ENCODE measurements at regions of chr9 and their contacts with region 1.

Region 1: DNA sequence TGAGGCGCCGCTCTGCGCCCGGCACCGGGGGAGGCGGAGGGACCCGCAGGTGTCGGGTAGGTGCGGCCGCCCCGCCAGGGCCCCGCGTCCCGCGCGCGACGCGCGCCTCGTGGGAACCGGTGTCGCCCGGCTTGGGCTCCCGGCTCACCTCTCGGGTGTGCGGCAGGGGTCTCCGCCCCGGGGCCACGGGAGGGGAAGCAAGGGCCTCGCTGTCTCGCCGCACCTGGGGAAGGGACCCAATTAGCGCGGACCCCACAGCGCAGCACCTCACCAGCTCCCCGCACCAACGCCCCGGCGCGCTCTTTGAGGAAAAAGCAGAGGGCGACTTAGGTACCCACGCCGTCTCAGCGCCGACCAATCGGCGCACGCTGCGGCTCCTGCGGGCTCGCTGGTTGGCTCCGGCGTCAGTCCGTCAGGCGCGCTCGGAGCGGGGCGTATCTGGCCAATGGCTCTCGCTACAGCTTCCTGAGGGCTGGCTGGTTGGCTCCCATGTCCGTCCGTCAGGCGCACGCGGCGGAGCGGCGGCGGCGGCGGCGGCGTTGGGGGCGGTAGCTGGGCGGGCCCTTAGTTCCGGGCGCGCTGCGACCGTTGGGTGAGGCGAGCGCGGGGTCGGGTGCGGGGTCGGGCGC is at the start of gene TRAF2:
- DNase-seq: peak; percentile 98
- H3K4me3 Mint-ChIP-seq: peak within 1 kb of the TSS; percentile 98
- H3K27ac Mint-ChIP-seq: peak within 1 kb of the TSS; percentile 89
- H3K4me1 Mint-ChIP-seq: peaks cover 59% of the 10 kb centered on the region
- H3K27me3 Mint-ChIP-seq: no peaks in the 10 kb centered on the region
- total RNA-seq, gene TRAF2: 39.7 to 41.8 TPM

Region 2: DNA sequence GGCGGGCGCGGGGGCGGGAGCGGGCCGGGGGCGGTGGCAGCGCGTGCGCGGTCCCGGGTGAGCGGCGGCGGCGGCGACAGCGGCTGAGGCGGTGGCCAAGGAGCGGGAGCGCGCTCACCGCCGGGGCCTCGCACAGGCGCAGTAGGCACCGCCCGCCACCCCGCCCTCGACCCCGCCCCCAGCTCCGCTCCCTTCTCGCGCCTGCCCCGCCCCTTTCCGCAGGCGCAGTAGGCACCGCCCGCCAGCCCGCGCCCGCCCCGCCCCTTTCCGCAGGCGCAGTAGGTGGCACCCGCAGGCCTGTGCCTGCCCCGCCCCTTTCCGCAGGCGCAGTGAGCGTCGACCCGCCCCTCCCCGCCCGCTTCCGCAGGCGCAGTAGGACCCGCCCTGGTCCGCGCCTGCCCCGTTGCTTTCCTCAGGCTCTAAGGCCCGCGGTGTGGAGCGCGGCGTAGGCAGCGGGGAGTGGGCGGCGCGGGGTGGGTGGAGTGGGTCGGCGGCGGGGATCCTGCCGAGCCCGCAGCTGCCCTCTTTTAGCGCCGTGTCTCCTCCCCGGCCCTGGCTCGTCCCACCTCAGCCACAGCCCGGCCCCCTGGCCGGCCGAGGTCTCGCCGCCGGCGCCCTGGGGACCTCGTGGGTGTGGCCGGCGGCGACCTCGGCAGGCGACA is 978.5 kb before region 1 on chr9 and contains the start of gene CAMSAP1:
- CTCF ChIA-PET with region 1: no interaction called
- intact Hi-C with region 1: loop called (anchors 10 kb)
- DNase-seq: peak; percentile 94
- H3K4me3 Mint-ChIP-seq: peak within 1 kb of the TSS; percentile 80
- H3K27ac Mint-ChIP-seq: peak within 1 kb of the TSS; percentile 89
- H3K4me1 Mint-ChIP-seq: peaks cover 53% of the 10 kb centered on the region
- H3K27me3 Mint-ChIP-seq: no peaks in the 10 kb centered on the region
- total RNA-seq, gene CAMSAP1: 32.6 to 35.2 TPM

Region 3: GRCh38 chr9:136539427-136540421 is 346.3 kb before region 1 on chr9:
- CTCF ChIA-PET with region 1: no interaction called
- intact Hi-C with region 1: loop called (anchors 2 kb)
- DNase-seq: peak; percentile 99
- H3K4me3 Mint-ChIP-seq: peak overlapping the region; percentile 80
- H3K27ac Mint-ChIP-seq: peak overlapping the region; percentile 100
- H3K4me1 Mint-ChIP-seq: peaks cover 70% of the 10 kb centered on the region
- H3K27me3 Mint-ChIP-seq: no peaks in the 10 kb centered on the region

Region 4: GRCh38 chr9:136700959-136701667 is 185.0 kb before region 1 on chr9:
- CTCF ChIA-PET with region 1: no interaction called
- intact Hi-C with region 1: no loop called
- DNase-seq: peak; percentile 93
- H3K4me3 Mint-ChIP-seq: peak overlapping the region; percentile 69
- H3K27ac Mint-ChIP-seq: peak overlapping the region; percentile 62
- H3K4me1 Mint-ChIP-seq: peaks cover 18% of the 10 kb centered on the region
- H3K27me3 Mint-ChIP-seq: peaks cover 9% of the 10 kb centered on the region

Region 5: GRCh38 chr9:136807281-136808074 is 78.6 kb before region 1 on chr9 and contains the start of gene RABL6:
- CTCF ChIA-PET with region 1: no interaction called
- intact Hi-C with region 1: loop called (anchors 5 kb)
- DNase-seq: peak; percentile 76
- H3K4me3 Mint-ChIP-seq: peak within 1 kb of the TSS; percentile 82
- H3K27ac Mint-ChIP-seq: peak within 1 kb of the TSS; percentile 88
- H3K4me1 Mint-ChIP-seq: peaks cover 32% of the 10 kb centered on the region
- H3K27me3 Mint-ChIP-seq: no peaks in the 10 kb centered on the region
- total RNA-seq, gene RABL6: 74.9 to 82.7 TPM

Region 6: GRCh38 chr9:136865735-136866103 is 20.3 kb before region 1 on chr9:
- CTCF ChIA-PET with region 1: interaction called, 3 read pairs
- intact Hi-C with region 1: loop called (anchors 1 kb)
- DNase-seq: no peak
- H3K4me3 Mint-ChIP-seq: peak overlapping the region; percentile 87
- H3K27ac Mint-ChIP-seq: peak overlapping the region; percentile 69
- H3K4me1 Mint-ChIP-seq: peaks cover 20% of the 10 kb centered on the region
- H3K27me3 Mint-ChIP-seq: no peaks in the 10 kb centered on the region

Region 7: GRCh38 chr9:136944519-136945279 is 58.6 kb after region 1 on chr9 and contains the starts of genes C8G and FBXW5:
- CTCF ChIA-PET with region 1: interaction called, 3 read pairs
- intact Hi-C with region 1: loop called (anchors 1 kb)
- DNase-seq: peak; percentile 94
- H3K4me3 Mint-ChIP-seq: peak within 1 kb of the TSS; percentile 77
- H3K27ac Mint-ChIP-seq: peak within 1 kb of the TSS; percentile 81
- H3K4me1 Mint-ChIP-seq: peaks cover 9% of the 10 kb centered on the region
- H3K27me3 Mint-ChIP-seq: no peaks in the 10 kb centered on the region
- total RNA-seq, gene C8G: 0.83 TPM in 1 of 2 experiments, not detected in the other
- total RNA-seq, gene FBXW5: 44.0 to 47.8 TPM

Region 8: DNA sequence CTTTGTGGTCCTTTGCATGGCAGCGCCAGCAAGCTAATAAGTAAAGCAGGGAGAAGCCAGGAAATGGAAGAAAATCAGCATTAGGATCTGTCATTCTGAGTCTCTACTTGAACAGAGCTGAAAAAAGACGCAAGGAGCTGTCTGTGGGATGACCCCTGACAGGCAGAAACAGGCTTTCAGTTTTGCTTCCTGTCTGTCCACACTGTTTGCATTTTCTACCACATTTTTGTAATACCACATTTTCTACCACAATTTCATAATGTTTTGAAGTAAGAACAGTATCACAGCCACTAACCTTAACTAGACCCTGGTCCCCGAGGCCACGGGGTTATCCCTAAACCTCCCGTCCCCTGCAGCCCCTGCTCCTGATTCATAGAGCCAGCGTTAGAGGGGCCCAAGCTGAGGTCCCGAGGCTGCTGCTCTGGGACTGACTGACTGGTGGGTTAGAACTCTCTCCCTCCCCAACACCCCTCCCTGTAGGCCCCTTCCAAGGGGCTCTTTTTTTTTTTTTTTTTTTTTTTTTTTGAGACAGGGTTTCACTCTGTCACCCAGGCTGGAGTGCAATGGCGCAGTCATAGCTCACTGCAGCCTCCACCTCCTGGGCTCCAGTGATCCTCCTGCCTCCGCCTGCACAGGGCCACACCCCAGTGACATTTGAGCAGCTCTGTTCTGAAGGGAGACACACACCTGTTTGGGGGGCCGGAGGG is 114.3 kb after region 1 on chr9:
- CTCF ChIA-PET with region 1: no interaction called
- intact Hi-C with region 1: no loop called
- DNase-seq: no peak
- H3K4me3 Mint-ChIP-seq: no peak overlapping the region
- H3K27ac Mint-ChIP-seq: no peak overlapping the region
- H3K4me1 Mint-ChIP-seq: peaks cover 13% of the 10 kb centered on the region
- H3K27me3 Mint-ChIP-seq: peaks cover 13% of the 10 kb centered on the region

Region 9: DNA sequence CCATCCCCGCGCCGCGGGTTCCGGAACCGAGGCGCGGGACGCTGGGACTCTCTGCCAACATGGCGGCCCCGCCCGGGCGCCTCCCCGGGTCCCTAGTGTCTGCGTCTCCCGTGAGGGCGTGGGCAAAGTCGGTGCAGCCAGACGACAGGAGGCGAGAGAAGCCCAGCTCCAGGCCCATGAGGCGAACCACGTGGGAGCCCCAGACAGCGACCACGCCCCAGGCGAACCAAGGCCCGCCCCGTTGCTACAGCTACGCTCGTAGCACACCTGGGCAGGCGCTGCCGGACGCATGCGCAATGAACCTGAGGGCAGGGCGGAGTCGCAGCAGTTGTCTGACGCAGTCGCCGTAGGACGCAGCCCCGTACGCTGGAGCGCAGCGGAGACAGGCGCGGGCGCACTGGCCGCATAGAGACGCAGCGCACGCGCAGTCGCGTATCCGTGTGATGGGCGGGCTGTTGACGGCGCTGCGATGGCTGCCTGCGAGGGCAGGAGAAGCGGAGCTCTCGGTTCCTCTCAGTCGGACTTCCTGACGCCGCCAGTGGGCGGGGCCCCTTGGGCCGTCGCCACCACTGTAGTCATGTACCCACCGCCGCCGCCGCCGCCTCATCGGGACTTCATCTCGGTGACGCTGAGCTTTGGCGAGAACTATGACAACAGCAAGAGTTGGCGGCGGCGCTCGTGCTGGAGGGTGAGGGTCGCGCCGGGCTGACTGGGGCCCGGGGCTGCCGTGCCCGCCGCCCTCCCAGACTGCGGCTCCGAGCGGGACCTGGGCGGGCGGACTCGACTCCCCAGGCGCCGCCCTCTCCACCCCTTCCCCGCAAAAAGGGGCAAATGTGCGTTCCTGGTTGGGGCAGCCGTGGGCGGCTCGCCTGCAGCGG is 200.7 kb after region 1 on chr9 and contains the start of gene MAN1B1:
- CTCF ChIA-PET with region 1: no interaction called
- intact Hi-C with region 1: loop called (anchors 2 kb)
- DNase-seq: peak; percentile 100
- H3K4me3 Mint-ChIP-seq: peak within 1 kb of the TSS; percentile 89
- H3K27ac Mint-ChIP-seq: peak within 1 kb of the TSS; percentile 89
- H3K4me1 Mint-ChIP-seq: peaks cover 36% of the 10 kb centered on the region
- H3K27me3 Mint-ChIP-seq: no peaks in the 10 kb centered on the region
- total RNA-seq, gene MAN1B1: 18.7 to 18.9 TPM